Cardiac septum (tissue), 1 donor: ENCODE measurements at regions of chr2 and their contacts with region 1.

Region 1: GRCh38 chr2:135473567-135473966 is 57.5 kb downstream of the ZRANB3 start:
- DNase-seq: no peak

Region 2: DNA sequence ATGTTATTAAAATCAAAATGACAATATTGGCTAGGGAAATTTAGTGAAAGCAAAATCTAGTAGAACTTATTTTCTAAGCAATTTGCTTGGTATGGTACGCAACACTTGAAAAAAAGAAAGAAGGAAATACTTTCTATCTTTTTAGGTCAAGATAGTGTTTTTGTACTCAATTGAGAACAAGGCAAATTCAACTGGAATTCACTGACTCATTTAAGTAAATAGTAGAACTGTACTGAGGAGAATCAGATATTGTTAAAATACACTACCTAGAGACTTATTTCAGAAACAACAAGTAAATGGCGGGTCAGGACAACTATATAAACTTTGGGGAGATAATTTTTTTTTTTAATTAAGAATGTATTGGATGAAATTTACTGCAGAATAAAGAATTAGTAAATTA is 38.5 kb after region 1 on chr2:
- intact Hi-C with region 1: no loop called
- DNase-seq: no peak

Region 3: DNA sequence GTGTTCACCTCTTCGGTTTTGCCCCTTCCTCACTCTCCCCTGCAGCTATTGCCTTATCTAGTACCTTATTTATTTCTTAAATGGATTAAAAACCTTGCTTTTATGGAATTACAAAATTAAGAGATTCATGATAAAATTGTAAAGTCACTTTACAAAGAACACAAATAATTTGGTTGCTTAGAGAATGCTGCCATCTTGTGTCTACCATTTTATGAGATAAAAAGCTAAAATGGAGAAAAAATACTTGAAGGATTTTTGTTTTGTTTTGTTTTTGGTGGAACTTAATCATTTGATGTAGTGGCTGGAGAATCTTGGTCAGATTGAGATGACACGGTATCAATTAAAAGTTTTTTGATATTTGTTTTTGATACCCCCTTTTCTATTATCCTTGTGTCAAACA is 127.3 kb after region 1 on chr2:
- intact Hi-C with region 1: loop called (anchors 10 kb)
- DNase-seq: no peak